CD4-positive, alpha-beta T cell (primary cell): ENCODE measurements at regions of chr11 and their contacts with region 1.

Region 1: GRCh38 chr11:10933455-10934292 is 75.8 kb upstream of the ZBED5 start:
- DNase-seq: peak; percentile 67 to 90 (median 80)
- ATAC-seq: peak; percentile 89
- H3K4me3 ChIP-seq: peak overlapping the region; percentile 56
- H3K4me3 Mint-ChIP-seq: peak overlapping the region; percentile 90
- H3K27ac ChIP-seq: no peak overlapping the region
- H3K27ac Mint-ChIP-seq: peak overlapping the region; percentile 52
- H3K4me1 ChIP-seq: peaks cover 24% of the 10 kb centered on the region
- H3K4me1 Mint-ChIP-seq: peaks cover 24% of the 10 kb centered on the region
- H3K27me3 ChIP-seq: peaks cover 25 to 31% of the 10 kb centered on the region in 2 experiments
- H3K27me3 Mint-ChIP-seq: peaks cover 49% of the 10 kb centered on the region
- CTCF ChIP-seq: peak; percentile 94

Region 2: GRCh38 chr11:10181811-10182210 is 751.9 kb before region 1 on chr11:
- CTCF ChIA-PET with region 1: no interaction called
- POLR2A ChIA-PET with region 1: no interaction called
- intact Hi-C with region 1: no loop called
- DNase-seq: peak in 1 of 14 experiments; percentile 4
- ATAC-seq: no peak
- H3K4me3 ChIP-seq: no peak overlapping the region
- H3K4me3 Mint-ChIP-seq: no peak overlapping the region
- H3K27ac ChIP-seq: no peak overlapping the region
- H3K27ac Mint-ChIP-seq: no peak overlapping the region
- H3K4me1 ChIP-seq: no peaks in the 10 kb centered on the region
- H3K4me1 Mint-ChIP-seq: no peaks in the 10 kb centered on the region
- H3K27me3 ChIP-seq: no peaks in the 10 kb centered on the region
- H3K27me3 Mint-ChIP-seq: no peaks in the 10 kb centered on the region
- CTCF ChIP-seq: no peak

Region 3: DNA sequence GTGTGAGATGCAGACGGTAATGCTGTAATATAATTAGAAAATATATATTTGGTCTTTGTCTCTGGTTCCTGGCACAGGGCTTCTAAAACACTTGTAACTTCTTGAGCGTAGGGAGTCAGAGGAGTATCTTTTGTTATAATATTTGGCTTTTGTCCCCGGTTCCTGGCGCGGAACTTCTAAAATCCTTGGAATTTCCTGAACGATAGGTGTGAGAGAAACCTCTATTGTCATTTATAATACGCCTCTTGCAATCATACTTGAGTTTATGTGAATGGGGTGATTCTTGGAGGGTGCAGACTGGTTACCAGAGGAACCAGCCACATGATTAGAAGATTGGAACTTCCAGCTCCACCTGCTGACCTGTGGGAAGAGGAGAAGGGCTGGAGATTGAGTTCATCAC is 21.8 kb before region 1 on chr11:
- CTCF ChIA-PET with region 1: no interaction called
- POLR2A ChIA-PET with region 1: no interaction called
- intact Hi-C with region 1: no loop called
- DNase-seq: no peak
- ATAC-seq: no peak
- H3K4me3 ChIP-seq: no peak overlapping the region
- H3K4me3 Mint-ChIP-seq: no peak overlapping the region
- H3K27ac ChIP-seq: no peak overlapping the region
- H3K27ac Mint-ChIP-seq: no peak overlapping the region
- H3K4me1 ChIP-seq: no peaks in the 10 kb centered on the region
- H3K4me1 Mint-ChIP-seq: no peaks in the 10 kb centered on the region
- H3K27me3 ChIP-seq: no peaks in the 10 kb centered on the region
- H3K27me3 Mint-ChIP-seq: peaks cover 3% of the 10 kb centered on the region
- CTCF ChIP-seq: no peak

Region 4: DNA sequence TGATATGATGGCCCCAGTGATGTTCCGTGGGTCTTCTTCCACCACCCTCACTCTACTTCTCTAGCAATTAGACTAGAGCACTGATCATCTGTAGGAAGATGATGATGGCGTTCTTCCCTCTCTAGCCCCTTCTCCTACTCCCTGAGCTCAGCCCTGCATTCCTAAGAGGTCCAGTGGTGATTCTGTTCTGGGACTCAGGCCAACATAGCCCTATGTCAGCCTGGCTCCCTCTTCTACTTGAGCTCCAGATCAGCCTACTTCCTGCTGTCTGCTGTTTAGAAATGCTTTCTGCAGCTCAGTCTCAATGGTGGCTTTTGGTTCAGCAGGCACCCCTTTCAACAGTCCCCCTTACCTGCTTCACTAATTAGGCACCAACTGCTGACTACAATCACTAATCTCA is 10.3 kb after region 1 on chr11:
- CTCF ChIA-PET with region 1: interaction called, 10 read pairs
- POLR2A ChIA-PET with region 1: no interaction called
- intact Hi-C with region 1: no loop called
- DNase-seq: no peak
- ATAC-seq: no peak
- H3K4me3 ChIP-seq: no peak overlapping the region
- H3K4me3 Mint-ChIP-seq: no peak overlapping the region
- H3K27ac ChIP-seq: no peak overlapping the region
- H3K27ac Mint-ChIP-seq: no peak overlapping the region
- H3K4me1 ChIP-seq: no peaks in the 10 kb centered on the region
- H3K4me1 Mint-ChIP-seq: no peaks in the 10 kb centered on the region
- H3K27me3 ChIP-seq: no peaks in the 10 kb centered on the region
- H3K27me3 Mint-ChIP-seq: peaks cover 10% of the 10 kb centered on the region
- CTCF ChIP-seq: no peak

Region 5: GRCh38 chr11:11022125-11022730 is 88.6 kb after region 1 on chr11:
- CTCF ChIA-PET with region 1: interaction called, 15 read pairs
- POLR2A ChIA-PET with region 1: interaction called, 3 read pairs
- intact Hi-C with region 1: loop called (anchors 1 kb)
- DNase-seq: peak in 4 of 14 experiments; percentile 41 to 61 (median 52)
- ATAC-seq: peak; percentile 49
- H3K4me3 ChIP-seq: no peak overlapping the region
- H3K4me3 Mint-ChIP-seq: no peak overlapping the region
- H3K27ac ChIP-seq: no peak overlapping the region
- H3K27ac Mint-ChIP-seq: no peak overlapping the region
- H3K4me1 ChIP-seq: no peaks in the 10 kb centered on the region
- H3K4me1 Mint-ChIP-seq: no peaks in the 10 kb centered on the region
- H3K27me3 ChIP-seq: no peaks in the 10 kb centered on the region
- H3K27me3 Mint-ChIP-seq: no peaks in the 10 kb centered on the region
- CTCF ChIP-seq: peak; percentile 66

Region 6: GRCh38 chr11:11787305-11788062 is 853.8 kb after region 1 on chr11:
- CTCF ChIA-PET with region 1: interaction called, 10 read pairs
- POLR2A ChIA-PET with region 1: no interaction called
- intact Hi-C with region 1: loop called (anchors 1 kb)
- DNase-seq: peak; percentile 54 to 83 (median 65)
- ATAC-seq: peak; percentile 88
- H3K4me3 ChIP-seq: no peak overlapping the region
- H3K4me3 Mint-ChIP-seq: no peak overlapping the region
- H3K27ac ChIP-seq: no peak overlapping the region
- H3K27ac Mint-ChIP-seq: no peak overlapping the region
- H3K4me1 ChIP-seq: no peaks in the 10 kb centered on the region
- H3K4me1 Mint-ChIP-seq: no peaks in the 10 kb centered on the region
- H3K27me3 ChIP-seq: no peaks in the 10 kb centered on the region
- H3K27me3 Mint-ChIP-seq: peaks cover 6% of the 10 kb centered on the region
- CTCF ChIP-seq: peak; percentile 92